BJ (cell line): ENCODE measurements at regions of chr19 and their contacts with region 1.

Region 1: GRCh38 chr19:16714702-16715287 is 4.9 kb upstream of the NWD1 start:
- DNase-seq: no peak
- H3K4me3 ChIP-seq: no peak overlapping the region
- H3K27me3 ChIP-seq: no peaks in the 10 kb centered on the region
- CTCF ChIP-seq: peak; percentile 91

Region 2: DNA sequence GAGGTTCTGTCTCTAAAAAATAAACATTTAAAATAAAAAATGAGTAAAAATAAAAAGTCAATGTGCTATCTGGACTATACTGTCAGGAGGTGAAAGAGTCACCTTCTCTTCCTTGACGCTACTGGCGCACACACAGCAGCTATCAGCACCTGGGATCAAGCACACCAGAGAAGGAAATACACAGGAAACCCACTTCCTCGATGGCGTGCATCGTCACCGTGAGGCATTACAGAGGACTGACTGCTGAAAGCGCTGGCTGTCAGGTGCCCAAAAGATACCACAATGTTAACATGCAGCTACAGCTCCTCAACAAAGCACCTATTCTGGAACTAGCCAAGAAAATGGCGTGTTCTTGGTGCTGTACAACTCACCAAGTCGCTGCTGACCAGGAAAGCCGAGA is 148.6 kb before region 1 on chr19:
- CTCF ChIA-PET with region 1: no interaction called
- POLR2A ChIA-PET with region 1: no interaction called
- DNase-seq: no peak
- H3K4me3 ChIP-seq: no peak overlapping the region
- H3K27me3 ChIP-seq: no peaks in the 10 kb centered on the region
- CTCF ChIP-seq: no peak

Region 3: DNA sequence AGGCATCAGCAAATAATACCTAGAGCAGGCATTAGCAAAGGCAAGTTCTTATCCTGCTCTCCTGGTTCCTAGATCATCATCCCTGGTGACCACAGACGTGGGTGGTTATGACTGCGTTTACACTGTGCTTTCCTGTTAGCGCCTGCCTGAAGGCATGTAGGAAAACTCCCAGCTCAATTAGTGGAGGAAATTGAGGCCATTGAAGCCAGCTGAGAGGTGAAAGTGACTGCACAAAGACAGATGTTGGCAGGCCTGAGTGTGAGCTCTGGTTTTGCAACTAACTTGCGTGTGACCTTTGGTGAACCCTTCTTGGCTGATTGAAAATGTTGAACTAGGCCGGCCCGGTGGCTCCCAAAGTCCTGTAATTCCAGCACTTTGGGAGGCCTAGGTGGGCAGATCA is 12.7 kb before region 1 on chr19:
- CTCF ChIA-PET with region 1: interaction called, 21 read pairs
- POLR2A ChIA-PET with region 1: no interaction called
- DNase-seq: peak; percentile 17
- H3K4me3 ChIP-seq: no peak overlapping the region
- H3K27me3 ChIP-seq: peaks cover 6% of the 10 kb centered on the region; the same call in 1 of the 2 replicates
- CTCF ChIP-seq: no peak

Region 4: DNA sequence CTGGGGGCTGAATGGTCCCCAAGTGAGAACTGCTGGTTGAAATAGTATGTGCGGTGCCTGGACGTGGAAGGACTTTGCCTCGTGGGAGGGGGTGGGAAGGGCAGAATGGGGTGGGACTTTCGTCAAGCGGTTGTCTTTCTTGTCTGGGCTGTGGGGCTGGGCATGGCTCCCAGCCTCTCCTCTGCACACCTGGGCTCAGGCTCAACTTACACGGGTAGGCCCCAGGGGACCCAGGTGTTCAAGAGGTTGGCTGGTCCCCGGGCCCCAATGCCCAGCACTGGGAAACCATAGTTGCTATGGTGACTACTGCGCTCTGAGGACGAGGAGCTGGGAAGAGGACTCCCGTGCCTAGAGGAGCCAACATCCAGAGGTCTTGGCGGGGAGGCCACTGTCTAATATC is 12.1 kb after region 1 on chr19:
- CTCF ChIA-PET with region 1: interaction called, 11 read pairs
- POLR2A ChIA-PET with region 1: no interaction called
- DNase-seq: no peak
- H3K4me3 ChIP-seq: no peak overlapping the region
- H3K27me3 ChIP-seq: peaks cover 2% of the 10 kb centered on the region; the same call in 1 of the 2 replicates
- CTCF ChIP-seq: no peak

Region 5: DNA sequence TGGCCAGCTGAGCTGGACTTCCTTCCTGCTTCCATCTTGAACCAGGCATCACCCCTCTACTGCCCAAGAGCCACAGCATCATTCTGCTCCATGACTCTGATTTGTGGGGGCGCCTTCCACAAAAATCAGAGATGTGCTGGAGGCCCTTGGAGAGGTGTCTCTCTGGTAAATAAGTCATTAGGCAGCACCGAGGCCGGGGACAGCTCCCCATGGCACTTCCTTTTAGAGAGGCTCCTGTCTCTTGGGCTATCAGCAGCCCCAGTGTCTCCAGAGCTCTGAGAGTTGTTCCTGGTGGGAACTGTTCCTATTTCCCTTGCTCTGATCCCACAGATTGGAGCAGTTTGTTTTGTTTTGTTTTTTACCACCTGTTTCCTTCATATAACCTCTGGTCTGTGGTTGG is 24.8 kb after region 1 on chr19:
- CTCF ChIA-PET with region 1: no interaction called
- POLR2A ChIA-PET with region 1: no interaction called
- DNase-seq: no peak
- H3K4me3 ChIP-seq: no peak overlapping the region
- H3K27me3 ChIP-seq: no peaks in the 10 kb centered on the region
- CTCF ChIP-seq: no peak